CD4-positive, alpha-beta T cell (primary cell): ENCODE measurements at regions of chr9 and their contacts with region 1.

Region 1: DNA sequence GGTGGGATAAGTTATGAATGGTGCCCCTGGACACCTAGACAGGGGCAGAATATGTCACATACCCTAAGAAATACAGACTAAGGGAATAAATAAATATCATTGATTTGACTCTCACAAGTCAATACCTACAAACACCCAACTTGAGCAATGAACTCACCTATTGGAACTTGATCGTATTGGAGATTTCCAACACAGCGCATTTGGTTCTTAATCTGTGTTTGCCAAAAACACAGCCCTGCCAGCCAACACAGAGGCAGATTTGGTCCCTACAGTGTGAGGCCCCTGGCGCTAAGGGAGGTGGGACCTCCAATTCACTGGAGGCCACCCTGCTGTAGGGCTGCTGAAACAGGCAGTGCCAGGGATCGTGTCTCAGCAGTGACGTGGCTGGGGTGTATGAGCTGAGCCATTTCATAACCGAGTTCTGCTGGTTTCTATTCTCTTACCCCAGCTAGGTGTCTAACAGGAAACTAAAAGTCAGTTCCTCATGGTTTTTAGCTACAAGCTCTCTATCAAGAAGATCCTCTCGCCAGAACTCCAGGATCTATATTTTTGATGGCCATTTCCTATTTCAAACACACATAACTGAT is 84.5 kb downstream of the SLC1A1 start:
- DNase-seq: no peak
- ATAC-seq: no peak
- H3K4me3 ChIP-seq: no peak overlapping the region
- H3K4me3 Mint-ChIP-seq: no peak overlapping the region
- H3K27ac ChIP-seq: no peak overlapping the region
- H3K27ac Mint-ChIP-seq: no peak overlapping the region
- H3K4me1 ChIP-seq: peaks cover 13% of the 10 kb centered on the region
- H3K4me1 Mint-ChIP-seq: peaks cover 27% of the 10 kb centered on the region
- H3K27me3 ChIP-seq: no peaks in the 10 kb centered on the region
- H3K27me3 Mint-ChIP-seq: no peaks in the 10 kb centered on the region
- CTCF ChIP-seq: no peak

Region 2: GRCh38 chr9:4499917-4500316 is 74.8 kb before region 1 on chr9:
- CTCF ChIA-PET with region 1: no interaction called
- POLR2A ChIA-PET with region 1: no interaction called
- intact Hi-C with region 1: loop called in 1 of 2 experiments (anchors 5 kb)
- DNase-seq: no peak
- ATAC-seq: no peak
- H3K4me3 ChIP-seq: no peak overlapping the region
- H3K4me3 Mint-ChIP-seq: no peak overlapping the region
- H3K27ac ChIP-seq: no peak overlapping the region
- H3K27ac Mint-ChIP-seq: no peak overlapping the region
- H3K4me1 ChIP-seq: no peaks in the 10 kb centered on the region
- H3K4me1 Mint-ChIP-seq: no peaks in the 10 kb centered on the region
- H3K27me3 ChIP-seq: peaks cover 5 to 13% of the 10 kb centered on the region in 2 experiments
- H3K27me3 Mint-ChIP-seq: peaks cover 20% of the 10 kb centered on the region
- CTCF ChIP-seq: no peak

Region 3: GRCh38 chr9:4620057-4620760 is 45.5 kb after region 1 on chr9:
- CTCF ChIA-PET with region 1: no interaction called
- POLR2A ChIA-PET with region 1: interaction called, 3 read pairs
- intact Hi-C with region 1: loop called in 1 of 2 experiments (anchors 10 kb)
- DNase-seq: peak in 1 of 14 experiments; percentile 46
- ATAC-seq: peak; percentile 39
- H3K4me3 ChIP-seq: no peak overlapping the region
- H3K4me3 Mint-ChIP-seq: no peak overlapping the region
- H3K27ac ChIP-seq: no peak overlapping the region
- H3K27ac Mint-ChIP-seq: no peak overlapping the region
- H3K4me1 ChIP-seq: peaks cover 16% of the 10 kb centered on the region
- H3K4me1 Mint-ChIP-seq: peaks cover 19% of the 10 kb centered on the region
- H3K27me3 ChIP-seq: no peaks in the 10 kb centered on the region
- H3K27me3 Mint-ChIP-seq: no peaks in the 10 kb centered on the region
- CTCF ChIP-seq: no peak

Region 4: GRCh38 chr9:4640027-4640426 is 65.3 kb after region 1 on chr9:
- CTCF ChIA-PET with region 1: no interaction called
- POLR2A ChIA-PET with region 1: no interaction called
- intact Hi-C with region 1: no loop called
- DNase-seq: peak; percentile 43 to 74 (median 51)
- ATAC-seq: peak; percentile 78
- H3K4me3 ChIP-seq: no peak overlapping the region
- H3K4me3 Mint-ChIP-seq: no peak overlapping the region
- H3K27ac ChIP-seq: no peak overlapping the region
- H3K27ac Mint-ChIP-seq: no peak overlapping the region
- H3K4me1 ChIP-seq: no peaks in the 10 kb centered on the region
- H3K4me1 Mint-ChIP-seq: peaks cover 12% of the 10 kb centered on the region
- H3K27me3 ChIP-seq: no peaks in the 10 kb centered on the region
- H3K27me3 Mint-ChIP-seq: no peaks in the 10 kb centered on the region
- CTCF ChIP-seq: peak; percentile 71